Common myeloid progenitor, CD34-positive (primary cell): ENCODE measurements at regions of chr6 and their contacts with region 1.

Region 1: DNA sequence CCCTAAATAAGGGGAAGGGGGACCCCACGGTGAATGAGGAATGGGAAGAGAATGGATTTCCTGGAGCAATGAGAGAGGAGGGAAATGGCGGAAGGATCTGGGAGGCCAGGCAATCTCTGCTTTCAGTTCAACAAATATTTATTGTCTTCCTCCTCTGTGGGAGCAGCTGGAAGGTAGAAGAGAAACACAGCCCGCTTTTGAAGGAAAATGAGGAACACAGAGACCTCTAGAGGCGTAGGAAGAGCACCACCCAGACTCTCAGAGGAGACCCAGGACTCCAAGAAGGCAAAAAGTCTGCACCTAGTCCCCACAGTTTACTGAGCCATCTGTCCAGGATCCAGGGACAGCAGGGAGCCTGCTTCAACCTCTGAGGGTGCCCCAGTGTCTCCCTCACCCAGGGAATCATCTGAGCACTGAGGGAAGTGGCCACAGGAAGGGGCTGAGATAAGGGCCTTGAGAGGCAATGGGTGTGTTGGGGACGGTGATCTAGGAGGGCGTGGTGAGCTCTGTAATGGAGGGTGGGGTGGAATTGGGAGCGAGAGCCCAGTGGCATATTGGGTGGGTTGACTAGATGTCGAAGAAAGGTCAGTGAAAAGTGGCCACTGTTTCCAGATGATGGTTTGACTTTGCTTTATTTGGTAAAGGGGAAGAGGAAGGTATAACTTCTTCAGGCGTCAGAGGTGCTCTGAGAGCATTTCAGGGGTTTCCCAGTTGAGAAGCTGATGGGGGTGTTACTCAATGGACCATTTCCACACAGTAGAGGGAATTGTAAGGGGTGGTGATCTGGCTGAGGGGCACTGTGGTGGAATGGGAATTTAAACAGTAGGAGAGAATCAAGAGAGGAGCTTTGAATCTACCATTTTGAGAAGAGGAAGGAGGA is 610 bp downstream of the PSORS1C1 start:
- DNase-seq: peak; percentile 53 to 78 (median 78)
- H3K4me3 ChIP-seq: no peak overlapping the region
- H3K27ac ChIP-seq: no peak overlapping the region
- H3K4me1 ChIP-seq: peaks cover 0 to 10% (median 7%) of the 10 kb centered on the region in 4 experiments
- H3K27me3 ChIP-seq: peaks cover 0 to 2% (median 0%) of the 10 kb centered on the region in 5 experiments

Region 2: DNA sequence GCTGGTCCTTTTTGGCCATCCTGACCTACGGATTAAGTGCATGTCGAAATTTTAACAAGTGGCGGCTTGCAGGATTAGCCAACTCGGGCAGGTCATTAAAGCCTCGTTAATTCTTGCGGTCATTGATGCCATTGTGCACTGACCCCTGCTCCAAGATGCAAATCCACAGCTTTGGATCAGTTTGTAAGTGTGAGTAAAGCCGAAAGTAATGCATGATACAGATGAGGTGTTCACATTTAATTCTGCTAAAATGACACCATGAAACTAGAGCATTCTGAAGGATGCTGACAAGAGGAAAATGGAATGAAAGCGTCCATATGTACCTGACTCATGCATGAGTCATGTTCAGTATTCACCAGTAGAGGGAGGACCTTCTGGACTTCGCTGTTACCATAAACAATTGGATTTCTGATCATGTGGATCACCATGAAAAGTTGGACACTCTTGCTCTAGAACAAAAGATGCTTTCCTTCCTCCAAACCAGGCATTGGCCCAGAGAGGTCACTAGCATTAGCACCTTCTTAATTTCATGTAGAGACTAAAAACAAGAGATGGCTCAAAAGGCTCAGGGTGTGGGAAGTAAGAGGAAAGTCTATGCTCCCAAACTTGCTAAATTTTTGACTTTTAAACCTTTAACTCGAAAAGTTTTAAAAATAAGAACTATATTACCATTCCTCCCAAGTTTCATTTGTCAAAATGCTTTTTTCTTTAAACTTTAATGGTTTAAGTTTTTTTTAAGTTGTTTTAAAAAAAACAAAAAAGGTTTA is 56.9 kb before region 1 on chr6:
- CTCF ChIA-PET with region 1: interaction called, 10 read pairs
- POLR2A ChIA-PET with region 1: no interaction called
- DNase-seq: peak; percentile 43 to 64 (median 62)
- H3K4me3 ChIP-seq: no peak overlapping the region
- H3K27ac ChIP-seq: no peak overlapping the region
- H3K4me1 ChIP-seq: peaks cover 0 to 12% (median 8%) of the 10 kb centered on the region in 4 experiments
- H3K27me3 ChIP-seq: peaks cover 0 to 4% (median 0%) of the 10 kb centered on the region in 5 experiments

Region 3: GRCh38 chr6:31094389-31094881 is 20.8 kb before region 1 on chr6:
- CTCF ChIA-PET with region 1: interaction called, 66 read pairs
- POLR2A ChIA-PET with region 1: no interaction called
- DNase-seq: peak; percentile 80 to 96 (median 94)
- H3K4me3 ChIP-seq: peak overlapping the region in 4 of 7 experiments; percentile 26 to 47 (median 36)
- H3K27ac ChIP-seq: peak overlapping the region; percentile 4 to 64
- H3K4me1 ChIP-seq: peaks cover 13 to 61% (median 47%) of the 10 kb centered on the region in 4 experiments
- H3K27me3 ChIP-seq: no peaks in the 10 kb centered on the region

Region 4: GRCh38 chr6:31103136-31103535 is 12.1 kb before region 1 on chr6:
- CTCF ChIA-PET with region 1: interaction called, 32 read pairs
- POLR2A ChIA-PET with region 1: no interaction called
- DNase-seq: no peak
- H3K4me3 ChIP-seq: no peak overlapping the region
- H3K27ac ChIP-seq: no peak overlapping the region
- H3K4me1 ChIP-seq: peaks cover 0 to 3% (median 1%) of the 10 kb centered on the region in 4 experiments
- H3K27me3 ChIP-seq: no peaks in the 10 kb centered on the region

Region 5: DNA sequence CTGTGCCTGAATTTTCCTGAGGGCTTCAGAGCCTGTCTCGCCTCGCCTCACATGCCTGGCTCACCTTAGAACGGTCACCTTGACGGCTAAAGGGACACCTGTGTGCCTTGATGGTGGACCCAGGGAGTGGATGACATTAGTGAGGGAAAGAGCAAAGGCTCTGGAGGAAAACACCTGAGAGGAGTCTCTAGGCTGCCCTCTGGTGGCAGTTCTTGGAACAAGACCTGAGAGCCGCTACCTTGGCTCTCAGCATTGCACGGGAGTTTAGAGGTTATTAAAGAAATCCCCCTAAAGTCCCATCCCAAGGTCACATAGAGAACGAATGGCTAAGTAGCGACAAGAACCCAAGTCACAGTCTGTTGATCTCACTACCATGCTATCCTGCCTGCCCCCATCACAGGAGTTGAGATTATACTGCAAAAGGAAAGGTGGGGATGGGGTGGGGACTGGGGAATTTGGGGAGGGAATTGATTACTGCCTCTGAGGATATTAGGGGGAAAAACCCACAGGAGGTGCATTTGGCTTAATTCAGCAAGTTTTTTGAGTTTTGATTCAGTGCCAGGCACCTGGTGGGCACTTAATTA is 13.0 kb after region 1 on chr6:
- CTCF ChIA-PET with region 1: interaction called, 36 read pairs
- POLR2A ChIA-PET with region 1: no interaction called
- DNase-seq: peak; percentile 36 to 68 (median 53)
- H3K4me3 ChIP-seq: no peak overlapping the region
- H3K27ac ChIP-seq: no peak overlapping the region
- H3K4me1 ChIP-seq: peaks cover 0 to 16% (median 11%) of the 10 kb centered on the region in 4 experiments
- H3K27me3 ChIP-seq: no peaks in the 10 kb centered on the region

Region 6: GRCh38 chr6:31180502-31180901 is 65.3 kb after region 1 on chr6:
- CTCF ChIA-PET with region 1: no interaction called
- POLR2A ChIA-PET with region 1: no interaction called
- DNase-seq: peak; percentile 81 to 84 (median 82)
- H3K4me3 ChIP-seq: peak overlapping the region; percentile 13 to 73 (median 44)
- H3K27ac ChIP-seq: no peak overlapping the region
- H3K4me1 ChIP-seq: peaks cover 0 to 9% (median 1%) of the 10 kb centered on the region in 4 experiments
- H3K27me3 ChIP-seq: no peaks in the 10 kb centered on the region

Region 7: GRCh38 chr6:31239854-31240253 is 124.6 kb after region 1 on chr6:
- CTCF ChIA-PET with region 1: no interaction called
- POLR2A ChIA-PET with region 1: no interaction called
- DNase-seq: no peak
- H3K4me3 ChIP-seq: no peak overlapping the region
- H3K27ac ChIP-seq: no peak overlapping the region
- H3K4me1 ChIP-seq: no peaks in the 10 kb centered on the region
- H3K27me3 ChIP-seq: no peaks in the 10 kb centered on the region